B cell (primary cell): ENCODE measurements at regions of chr6 and their contacts with region 1.

Region 1: DNA sequence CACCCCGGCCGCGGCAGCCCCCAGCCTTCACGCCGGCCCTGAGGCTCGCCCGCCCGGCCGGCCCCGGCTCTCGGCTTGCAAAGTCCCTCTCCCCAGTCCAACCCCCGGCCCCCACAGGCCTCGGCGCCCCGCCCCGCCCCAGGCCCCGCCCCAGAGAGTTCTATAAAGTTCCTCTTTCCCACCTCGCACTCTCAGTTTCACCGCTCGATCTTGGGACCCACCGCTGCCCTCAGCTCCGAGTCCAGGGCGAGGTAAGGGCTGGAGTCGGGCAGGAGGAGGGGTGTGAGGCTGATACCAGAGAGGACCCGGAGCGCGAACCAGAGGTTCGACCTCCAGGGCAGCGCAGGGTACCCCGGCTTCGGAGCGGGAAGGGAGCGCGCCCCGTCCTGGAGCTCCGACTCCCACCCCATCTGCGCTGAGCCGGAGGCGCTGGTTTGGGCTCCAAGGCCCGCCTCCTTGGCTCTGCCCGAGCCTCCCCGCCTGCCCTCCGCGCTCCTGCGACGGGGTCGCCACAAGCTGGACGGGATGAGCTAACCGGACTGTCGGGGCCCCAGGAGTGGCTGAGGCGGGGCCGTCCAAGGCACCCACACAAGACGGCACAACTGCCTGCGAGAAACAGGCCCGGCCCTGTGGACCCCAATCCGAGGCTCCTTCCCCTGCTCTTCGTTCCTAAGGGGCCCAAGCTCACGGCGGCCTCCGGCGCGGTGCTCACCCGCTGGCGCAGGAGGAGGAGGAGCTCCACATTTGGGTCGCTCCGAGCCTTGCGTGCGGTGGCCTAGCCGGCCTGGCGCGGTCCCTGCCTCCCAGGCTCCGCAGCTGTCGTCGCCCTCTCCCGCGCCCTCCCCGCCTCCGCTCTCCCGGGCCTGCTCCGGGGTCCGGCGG is at the start of gene IRF4:
- DNase-seq: peak; percentile 90
- ATAC-seq: peak; percentile 70
- H3K4me3 ChIP-seq: peak within 1 kb of the TSS; percentile 63 to 98 (median 93)
- H3K4me3 Mint-ChIP-seq: peak within 1 kb of the TSS; percentile 95
- H3K27ac ChIP-seq: peak within 1 kb of the TSS; percentile 71 to 82
- H3K27ac Mint-ChIP-seq: peak within 1 kb of the TSS; percentile 99
- H3K4me1 ChIP-seq: peaks cover 35 to 43% of the 10 kb centered on the region in 2 donors
- H3K4me1 Mint-ChIP-seq: peaks cover 51% of the 10 kb centered on the region
- H3K27me3 ChIP-seq: no peaks in the 10 kb centered on the region
- H3K27me3 Mint-ChIP-seq: no peaks in the 10 kb centered on the region
- CTCF ChIP-seq: no peak
- total RNA-seq, gene IRF4: 129 and 142 TPM in 2 replicates

Region 2: DNA sequence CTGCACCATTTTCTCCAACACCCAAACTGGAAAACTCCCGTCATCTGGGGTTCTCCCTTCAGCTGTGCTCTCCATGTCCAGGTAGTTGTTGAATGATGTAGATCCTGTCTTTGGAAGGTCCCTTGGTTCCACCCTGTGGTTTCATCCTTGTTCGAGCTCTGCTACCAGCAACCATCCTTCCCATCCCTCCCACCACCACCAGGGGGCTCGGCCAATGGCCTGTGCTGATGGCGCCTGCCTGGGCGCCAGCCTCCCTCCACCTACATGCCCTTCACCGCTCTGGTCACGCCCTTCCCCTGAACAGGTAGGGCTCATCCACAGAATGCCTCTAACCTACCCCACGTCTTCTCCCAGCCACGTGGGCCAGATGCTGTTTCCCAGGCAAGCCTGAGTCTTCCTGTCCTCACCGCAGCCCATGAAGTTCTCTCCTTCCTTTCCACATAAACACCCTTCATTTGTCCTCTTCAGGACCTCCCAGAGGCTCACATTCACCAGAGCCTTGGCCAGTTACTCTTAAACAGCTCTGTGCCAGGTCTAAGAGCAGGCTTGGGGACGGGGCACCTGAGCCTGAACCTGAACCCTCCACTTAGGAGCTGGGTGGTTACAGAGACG is 174.6 kb before region 1 on chr6:
- CTCF ChIA-PET with region 1: interaction called, 7 read pairs
- POLR2A ChIA-PET with region 1: interaction called, 8 read pairs
- intact Hi-C with region 1: loop called (anchors 2 kb)
- DNase-seq: peak; percentile 49
- ATAC-seq: no peak
- H3K4me3 ChIP-seq: no peak overlapping the region
- H3K4me3 Mint-ChIP-seq: peak overlapping the region; percentile 58
- H3K27ac ChIP-seq: no peak overlapping the region
- H3K27ac Mint-ChIP-seq: peak overlapping the region; percentile 44
- H3K4me1 ChIP-seq: peaks cover 43 to 62% of the 10 kb centered on the region in 2 donors
- H3K4me1 Mint-ChIP-seq: peaks cover 69% of the 10 kb centered on the region
- H3K27me3 ChIP-seq: peaks cover 0 to 2% (median 0%) of the 10 kb centered on the region in 4 experiments
- H3K27me3 Mint-ChIP-seq: no peaks in the 10 kb centered on the region
- CTCF ChIP-seq: peak; percentile 50

Region 3: GRCh38 chr6:551405-551804 is 159.6 kb after region 1 on chr6:
- CTCF ChIA-PET with region 1: interaction called, 11 read pairs
- POLR2A ChIA-PET with region 1: no interaction called
- intact Hi-C with region 1: no loop called
- DNase-seq: peak; percentile 16
- ATAC-seq: peak; percentile 43
- H3K4me3 ChIP-seq: no peak overlapping the region
- H3K4me3 Mint-ChIP-seq: no peak overlapping the region
- H3K27ac ChIP-seq: no peak overlapping the region
- H3K27ac Mint-ChIP-seq: no peak overlapping the region
- H3K4me1 ChIP-seq: no peaks in the 10 kb centered on the region
- H3K4me1 Mint-ChIP-seq: no peaks in the 10 kb centered on the region
- H3K27me3 ChIP-seq: no peaks in the 10 kb centered on the region
- H3K27me3 Mint-ChIP-seq: no peaks in the 10 kb centered on the region
- CTCF ChIP-seq: no peak

Region 4: DNA sequence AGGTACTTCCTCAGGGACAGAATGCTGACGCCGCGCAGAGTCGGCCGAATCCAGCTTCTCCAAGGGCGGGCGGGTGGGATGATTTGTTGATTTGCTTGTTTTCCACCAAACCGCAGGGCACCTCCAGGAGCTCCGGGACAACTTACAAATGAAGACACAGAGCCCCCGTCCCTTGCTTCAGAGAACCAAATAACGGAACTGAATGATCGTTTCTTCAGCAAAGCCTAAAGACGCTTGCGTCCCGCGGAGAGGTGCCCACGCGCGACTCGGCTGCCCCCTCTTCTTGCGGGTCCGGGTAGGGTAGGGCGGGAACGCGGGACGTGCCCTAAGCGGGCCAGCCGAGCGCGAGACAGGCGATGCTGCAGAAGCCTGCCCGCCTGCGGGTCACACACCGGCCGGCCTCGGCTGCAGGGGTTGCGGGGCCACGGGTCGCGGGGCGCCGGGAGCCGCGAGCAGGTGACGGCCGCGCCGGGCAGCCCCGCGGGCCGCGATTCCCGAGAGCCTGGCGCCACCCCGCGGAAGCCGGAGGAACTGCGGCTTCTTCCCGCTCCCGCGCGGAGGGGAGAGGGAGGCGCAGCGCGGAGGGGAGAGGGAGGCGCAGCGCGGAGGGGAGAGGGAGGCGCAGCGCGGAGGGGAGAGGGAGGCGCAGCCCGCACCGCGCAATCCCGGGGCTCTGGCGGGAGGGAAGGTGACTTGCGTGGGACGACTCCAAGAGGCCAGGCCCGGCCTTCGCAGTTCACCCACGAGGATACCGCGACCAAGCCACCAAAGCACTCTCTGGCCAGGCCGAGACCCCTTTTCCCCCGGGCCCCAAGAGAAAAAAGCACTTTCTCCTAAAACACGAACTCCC is 989.9 kb after region 1 on chr6:
- CTCF ChIA-PET with region 1: no interaction called
- POLR2A ChIA-PET with region 1: no interaction called
- intact Hi-C with region 1: loop called (anchors 5 kb)
- DNase-seq: peak; percentile 65
- ATAC-seq: peak; percentile 58
- H3K4me3 ChIP-seq: peak overlapping the region in 2 of 5 experiments; percentile 11 to 19
- H3K4me3 Mint-ChIP-seq: peak overlapping the region; percentile 46
- H3K27ac ChIP-seq: no peak overlapping the region
- H3K27ac Mint-ChIP-seq: no peak overlapping the region
- H3K4me1 ChIP-seq: peaks cover 56 to 83% of the 10 kb centered on the region in 2 donors
- H3K4me1 Mint-ChIP-seq: peaks cover 40% of the 10 kb centered on the region
- H3K27me3 ChIP-seq: peaks cover 2 to 95% (median 70%) of the 10 kb centered on the region in 4 experiments
- H3K27me3 Mint-ChIP-seq: peaks cover 62% of the 10 kb centered on the region
- CTCF ChIP-seq: peak; percentile 79